CD14-positive monocyte (primary cell): ENCODE measurements at regions of chr18 and their contacts with region 1.

Region 1: DNA sequence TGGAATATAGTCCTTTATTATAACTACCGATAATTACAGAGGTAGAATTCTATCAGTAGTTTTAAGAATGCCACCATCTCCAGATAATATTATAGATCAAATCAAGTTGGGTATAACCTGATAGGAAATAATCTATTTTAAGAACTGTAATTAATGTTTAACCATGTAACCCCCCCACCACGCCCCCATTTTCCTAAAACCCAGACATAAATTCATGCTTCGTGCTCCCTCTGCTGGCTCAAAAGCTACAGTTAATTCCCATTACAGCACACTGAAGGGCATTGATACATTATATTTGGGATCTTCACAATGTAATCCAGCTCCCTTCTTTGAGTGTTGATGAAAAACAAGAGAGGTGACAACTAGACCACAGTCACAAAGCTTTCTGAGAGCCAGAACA is 228.0 kb upstream of the SMAD7 start:
- DNase-seq: no peak
- H3K4me3 ChIP-seq: no peak overlapping the region
- H3K4me3 Mint-ChIP-seq: no peak overlapping the region
- H3K27ac ChIP-seq: no peak overlapping the region
- H3K27ac Mint-ChIP-seq: no peak overlapping the region
- H3K4me1 ChIP-seq: peaks cover 0 to 10% of the 10 kb centered on the region in 2 donors
- H3K4me1 Mint-ChIP-seq: peaks cover 10% of the 10 kb centered on the region
- H3K27me3 ChIP-seq: no peaks in the 10 kb centered on the region
- H3K27me3 Mint-ChIP-seq: peaks cover 0 to 5% (median 0%) of the 10 kb centered on the region in 3 donors
- CTCF ChIP-seq: peak; percentile 52

Region 2: DNA sequence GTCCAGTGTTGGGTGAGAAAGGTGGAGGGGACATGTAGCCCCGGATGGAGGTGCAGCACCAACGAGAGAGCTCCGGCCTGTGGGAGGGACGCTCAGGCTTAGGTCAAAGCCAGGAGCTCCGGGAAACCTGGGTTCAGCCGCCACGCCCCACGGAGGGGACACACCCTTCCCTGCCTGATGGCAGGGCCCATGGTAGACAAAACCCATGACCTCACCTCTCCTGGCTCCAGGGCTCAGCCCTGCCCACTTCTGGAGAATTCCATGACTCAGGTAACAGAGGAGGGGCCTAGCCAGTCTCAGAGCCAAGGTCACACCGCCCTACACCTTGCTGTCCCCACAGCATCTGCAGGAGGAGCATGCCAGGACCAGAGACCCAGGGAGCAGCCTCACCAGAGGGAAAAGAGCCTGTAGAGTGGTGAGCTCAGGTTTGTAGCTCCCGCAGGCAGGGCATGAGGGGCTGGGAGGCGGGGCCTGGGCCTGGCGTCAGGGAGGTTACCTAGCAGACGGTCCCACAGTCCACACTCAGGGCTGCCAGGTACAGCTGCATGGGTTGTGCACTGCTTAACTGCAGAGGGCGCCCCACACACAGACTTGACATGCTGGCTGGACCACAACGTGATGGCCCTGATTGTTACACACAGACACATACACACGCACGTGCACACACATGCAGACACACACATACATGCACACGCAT is 157.2 kb before region 1 on chr18:
- intact Hi-C with region 1: loop called in 1 of 2 experiments (anchors 10 kb)
- DNase-seq: peak; percentile 20 to 61 (median 50)
- H3K4me3 ChIP-seq: no peak overlapping the region
- H3K4me3 Mint-ChIP-seq: no peak overlapping the region
- H3K27ac ChIP-seq: no peak overlapping the region
- H3K27ac Mint-ChIP-seq: peak overlapping the region in 1 of 7 donors; percentile 37
- H3K4me1 ChIP-seq: no peaks in the 10 kb centered on the region
- H3K4me1 Mint-ChIP-seq: peaks cover 10% of the 10 kb centered on the region
- H3K27me3 ChIP-seq: no peaks in the 10 kb centered on the region
- H3K27me3 Mint-ChIP-seq: peaks cover 4 to 7% (median 4%) of the 10 kb centered on the region in 3 donors
- CTCF ChIP-seq: peak; percentile 66

Region 3: GRCh38 chr18:49135877-49136276 is 42.9 kb before region 1 on chr18:
- intact Hi-C with region 1: no loop called
- DNase-seq: no peak
- H3K4me3 ChIP-seq: no peak overlapping the region
- H3K4me3 Mint-ChIP-seq: no peak overlapping the region
- H3K27ac ChIP-seq: no peak overlapping the region
- H3K27ac Mint-ChIP-seq: no peak overlapping the region
- H3K4me1 ChIP-seq: no peaks in the 10 kb centered on the region
- H3K4me1 Mint-ChIP-seq: no peaks in the 10 kb centered on the region
- H3K27me3 ChIP-seq: no peaks in the 10 kb centered on the region
- H3K27me3 Mint-ChIP-seq: no peaks in the 10 kb centered on the region
- CTCF ChIP-seq: no peak

Region 4: GRCh38 chr18:49340446-49340845 is 161.7 kb after region 1 on chr18:
- intact Hi-C with region 1: no loop called
- DNase-seq: no peak
- H3K4me3 ChIP-seq: no peak overlapping the region
- H3K4me3 Mint-ChIP-seq: no peak overlapping the region
- H3K27ac ChIP-seq: no peak overlapping the region
- H3K27ac Mint-ChIP-seq: no peak overlapping the region
- H3K4me1 ChIP-seq: no peaks in the 10 kb centered on the region
- H3K4me1 Mint-ChIP-seq: peaks cover 9% of the 10 kb centered on the region
- H3K27me3 ChIP-seq: no peaks in the 10 kb centered on the region
- H3K27me3 Mint-ChIP-seq: peaks cover 0 to 1% (median 0%) of the 10 kb centered on the region in 3 donors
- CTCF ChIP-seq: no peak